Right ventricle myocardium inferior (tissue), 1 donor: ENCODE measurements at regions of chr10 and their contacts with region 1.

Region 1: DNA sequence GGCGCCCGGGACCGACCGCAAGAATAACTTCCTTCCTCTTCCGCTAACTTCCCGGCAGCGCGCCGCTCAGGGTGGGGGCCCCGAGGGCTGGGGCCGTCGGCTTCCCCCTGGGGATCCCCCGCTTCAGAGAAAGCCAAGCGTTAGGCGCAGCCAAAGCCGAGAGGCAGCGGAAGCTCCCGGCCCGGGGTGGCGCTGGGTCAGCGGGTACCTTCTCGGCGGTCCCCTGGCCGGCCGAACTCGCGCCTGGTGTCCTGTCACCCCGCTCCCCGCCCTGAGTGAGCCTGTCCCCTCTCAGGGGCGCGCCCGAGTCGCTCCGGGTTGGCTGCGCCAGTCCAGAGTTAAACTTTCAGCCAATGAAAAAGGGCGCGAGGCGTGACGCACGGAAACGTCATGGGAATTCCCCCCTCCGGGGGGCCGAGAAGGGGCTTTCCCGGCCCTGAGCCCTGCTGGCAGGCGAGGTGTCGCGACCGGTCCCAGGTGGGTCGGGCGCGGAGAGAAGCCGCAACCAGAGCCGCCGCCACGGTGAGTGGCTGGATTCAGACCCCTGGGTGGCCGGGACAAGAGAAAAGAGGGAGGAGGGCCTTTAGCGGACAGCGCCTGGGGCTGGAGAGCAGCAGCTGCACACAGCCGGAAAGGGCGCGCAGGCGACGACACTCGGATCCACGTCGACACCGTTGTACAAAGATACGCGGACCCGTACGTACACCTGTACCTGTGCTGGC is 1.3 kb upstream of the NFKB2 start:
- DNase-seq: peak; percentile 98
- ATAC-seq: peak; percentile 94

Region 2: GRCh38 chr10:102151774-102152544 is 242.3 kb before region 1 on chr10 and contains the start of gene NOLC1:
- intact Hi-C with region 1: loop called (anchors 1 kb)
- DNase-seq: peak; percentile 99
- ATAC-seq: peak; percentile 99
- total RNA-seq, gene NOLC1: 25.8 TPM

Region 3: GRCh38 chr10:102167861-102168260 is 226.4 kb before region 1 on chr10:
- intact Hi-C with region 1: loop called (anchors 2 kb)
- DNase-seq: no peak
- ATAC-seq: no peak

Region 4: DNA sequence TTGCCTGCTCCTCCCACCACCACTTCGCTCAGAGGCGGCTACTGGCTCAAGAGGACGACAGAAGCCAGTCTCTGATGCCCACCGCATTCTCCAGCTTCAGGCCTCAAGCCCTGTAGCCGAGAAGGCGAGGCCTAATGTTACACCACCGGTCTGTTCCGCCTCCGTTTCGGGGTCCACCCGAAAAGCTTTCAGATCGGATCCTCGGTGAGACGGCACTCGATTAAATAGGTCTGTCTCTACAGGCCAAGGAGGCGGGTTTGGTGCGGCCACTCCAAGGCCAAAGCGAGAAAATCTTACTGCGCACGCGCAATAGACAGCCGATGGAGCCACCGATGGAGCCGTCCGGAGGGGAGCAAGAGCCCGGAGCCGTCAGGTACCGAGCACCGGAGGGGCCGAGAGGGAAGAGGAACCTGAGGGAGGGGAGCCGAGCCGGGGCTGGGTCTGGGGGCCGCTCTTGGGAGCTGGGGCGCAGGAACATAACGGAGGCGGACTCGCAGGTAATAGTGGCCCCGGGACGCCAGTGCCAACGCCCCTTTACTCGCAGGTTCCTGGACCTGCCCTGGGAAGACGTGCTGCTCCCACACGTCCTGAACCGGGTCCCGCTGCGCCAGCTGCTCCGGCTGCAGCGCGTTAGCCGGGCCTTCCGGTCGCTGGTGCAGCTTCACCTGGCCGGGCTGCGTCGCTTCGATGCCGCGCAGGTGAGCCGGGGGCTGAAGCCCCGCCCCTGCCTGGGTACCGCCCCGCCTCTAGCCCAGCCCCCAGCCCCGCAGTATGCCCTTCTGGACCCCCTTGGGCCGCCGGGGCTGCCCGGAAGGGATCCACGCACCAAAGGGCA is 26.8 kb after region 1 on chr10 and contains the start of gene FBXL15:
- intact Hi-C with region 1: loop called (anchors 2 kb)
- DNase-seq: peak; percentile 98
- ATAC-seq: peak; percentile 93
- total RNA-seq, gene FBXL15: 8.4 TPM

Region 5: DNA sequence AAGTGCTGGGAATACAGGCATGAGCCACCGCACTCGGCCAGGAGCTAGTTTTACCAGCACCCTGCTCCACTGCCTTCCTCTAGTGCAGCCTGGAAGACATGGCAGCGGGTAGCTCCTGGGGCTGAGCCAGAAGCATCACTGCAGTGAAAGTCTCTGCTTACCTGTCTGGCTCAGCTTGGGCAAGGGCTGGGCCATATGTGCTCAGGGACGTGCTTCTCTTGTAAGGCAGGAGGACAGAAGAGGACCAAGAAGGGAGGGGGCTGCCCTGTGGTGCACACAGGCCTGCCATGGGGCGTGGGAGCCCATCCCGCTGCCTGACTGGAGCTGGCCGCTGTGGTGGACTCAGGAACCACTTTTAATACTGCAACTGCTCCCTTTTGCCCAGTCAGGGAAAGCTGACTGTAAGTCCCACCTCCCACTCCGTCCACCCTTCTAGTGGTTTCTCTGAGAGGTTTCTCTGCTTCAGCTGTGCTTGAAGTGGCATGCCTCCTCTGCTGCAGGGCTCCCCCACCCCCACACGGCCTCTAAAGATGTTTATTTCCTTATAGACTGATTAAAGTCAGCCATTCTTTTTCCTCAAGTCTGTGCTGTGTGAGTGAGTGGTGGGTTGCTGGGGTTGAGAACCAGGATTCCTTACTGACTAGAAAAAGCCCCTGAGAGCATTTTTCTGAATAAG is 82.4 kb after region 1 on chr10:
- intact Hi-C with region 1: loop called (anchors 2 kb)
- DNase-seq: no peak
- ATAC-seq: no peak